A549 (cell line): ENCODE measurements at regions of chr9 and their contacts with region 1.

Region 1: GRCh38 chr9:123389070-123389469 is 33.1 kb downstream of the CRB2 start:
- DNase-seq: no peak
- ATAC-seq: no peak
- H3K4me3 ChIP-seq: no peak overlapping the region
- H3K27ac ChIP-seq: no peak overlapping the region
- H3K4me1 ChIP-seq: no peaks in the 10 kb centered on the region
- CTCF ChIP-seq: no peak
- EP300 ChIP-seq: no peak
- POLR2A ChIP-seq: no peak
- RAD21 ChIP-seq: no peak

Region 2: GRCh38 chr9:123401879-123402513 is 12.9 kb after region 1 on chr9:
- CTCF ChIA-PET with region 1: interaction called, 58 read pairs
- POLR2A ChIA-PET with region 1: no interaction called
- DNase-seq: peak; percentile 52 to 90
- ATAC-seq: peak; percentile 84 to 93
- H3K4me3 ChIP-seq: no peak overlapping the region
- H3K27ac ChIP-seq: no peak overlapping the region
- H3K4me1 ChIP-seq: no peaks in the 10 kb centered on the region
- CTCF ChIP-seq: peak; percentile 64
- EP300 ChIP-seq: no peak
- POLR2A ChIP-seq: no peak
- RAD21 ChIP-seq: peak; percentile 70 to 84

Region 3: DNA sequence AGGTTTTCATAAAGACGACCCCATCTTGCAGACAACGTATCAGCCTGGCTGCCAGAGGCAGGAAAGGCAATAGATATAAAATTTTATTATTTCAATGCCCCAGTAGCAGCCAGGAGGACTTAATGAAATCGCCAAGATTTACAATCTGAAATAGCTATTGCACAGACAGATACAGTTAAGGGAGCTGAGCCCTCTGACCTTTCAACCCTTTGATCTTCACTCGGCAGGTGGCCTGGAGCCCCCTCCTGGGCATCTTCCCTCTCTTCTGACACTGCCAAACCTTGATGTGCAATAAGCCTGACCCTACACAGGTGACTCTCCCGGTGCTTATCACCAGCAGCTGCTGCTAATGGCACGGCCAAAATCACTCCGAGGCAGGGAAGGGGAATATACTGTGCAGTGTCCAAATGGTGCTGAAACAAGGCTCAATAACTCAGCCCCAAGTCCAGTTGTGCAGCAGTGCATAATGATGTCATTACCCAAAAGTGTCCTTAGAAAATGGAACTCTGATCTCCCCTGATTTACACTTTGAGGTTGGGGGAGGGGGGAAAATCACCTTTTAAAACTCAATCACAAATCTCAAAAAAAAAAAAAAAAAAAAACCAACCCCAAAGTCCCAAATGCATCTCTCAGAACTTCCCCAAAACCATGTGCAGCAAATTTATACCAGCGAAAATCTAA is 208.9 kb after region 1 on chr9:
- CTCF ChIA-PET with region 1: no interaction called
- POLR2A ChIA-PET with region 1: no interaction called
- DNase-seq: no peak
- ATAC-seq: no peak
- H3K4me3 ChIP-seq: no peak overlapping the region
- H3K27ac ChIP-seq: no peak overlapping the region
- H3K4me1 ChIP-seq: no peaks in the 10 kb centered on the region
- CTCF ChIP-seq: no peak
- EP300 ChIP-seq: no peak
- POLR2A ChIP-seq: no peak
- RAD21 ChIP-seq: no peak